Thyroid gland (tissue), 4 donors: ENCODE measurements at regions of chr6 and their contacts with region 1.

Region 1: GRCh38 chr6:145814501-145815308 is at the start of gene FBXO30:
- DNase-seq: peak; percentile 86 to 88
- H3K4me3 ChIP-seq: peak within 1 kb of the TSS; percentile 35 to 72 (median 56)
- H3K27ac ChIP-seq: peak within 1 kb of the TSS; percentile 85 to 91 (median 90)
- H3K4me1 ChIP-seq: peaks cover 21 to 34% of the 10 kb centered on the region in 2 donors
- H3K27me3 ChIP-seq: no peaks in the 10 kb centered on the region
- CTCF ChIP-seq: peak in 4 of 6 experiments; percentile 3 to 48 (median 28)
- POLR2A ChIP-seq: peak; percentile 81 to 97
- total RNA-seq, gene FBXO30: 18.8 to 33.3 (median 20.8) TPM

Region 2: DNA sequence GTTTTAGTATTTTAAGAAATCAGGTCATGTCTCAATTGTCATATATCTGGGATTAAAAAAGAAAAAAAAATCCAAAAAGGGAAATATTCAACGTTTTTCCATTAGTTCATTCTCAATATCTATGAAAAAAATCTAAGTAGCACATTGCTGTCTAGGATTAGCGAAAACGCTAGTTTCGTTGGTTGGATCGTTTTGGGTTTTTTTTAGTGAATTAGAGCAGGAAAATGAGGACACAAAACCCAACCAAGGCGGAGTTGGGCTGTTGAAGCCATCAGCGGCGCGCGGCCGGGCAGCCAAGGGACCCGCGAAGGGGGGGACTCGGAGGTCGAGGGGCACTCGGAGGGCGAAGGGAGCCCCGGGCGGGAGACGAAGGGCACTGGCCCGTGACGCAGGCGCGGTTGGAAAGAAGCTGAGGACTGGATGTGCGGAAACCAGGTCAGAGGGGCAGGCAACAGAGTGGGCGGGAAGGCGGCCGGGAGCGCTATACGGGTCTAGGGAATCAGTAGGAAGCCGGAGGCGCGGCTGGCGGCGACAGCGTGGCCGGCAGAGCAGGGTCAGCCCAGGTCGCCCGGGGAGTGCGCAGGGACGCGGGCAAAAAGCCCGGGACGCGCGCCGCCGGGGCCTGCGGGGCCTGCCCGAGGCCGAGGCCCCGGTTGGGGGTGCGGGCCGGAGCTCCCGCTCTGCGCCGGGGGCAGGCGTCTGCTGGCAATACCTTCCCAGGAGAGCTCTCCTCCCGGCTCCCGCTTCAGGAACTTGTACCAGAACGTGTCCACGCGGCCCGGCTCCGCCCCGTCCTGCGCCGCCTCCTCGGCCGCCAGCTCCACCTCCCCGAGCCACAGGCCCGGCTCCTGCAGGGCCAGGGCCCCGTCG is 80.0 kb before region 1 on chr6:
- intact Hi-C with region 1: loop called (anchors 5 kb)
- DNase-seq: peak; percentile 92 to 93
- H3K4me3 ChIP-seq: peak overlapping the region; percentile 17 to 75 (median 42)
- H3K27ac ChIP-seq: peak overlapping the region; percentile 96 to 98 (median 98)
- H3K4me1 ChIP-seq: no peaks in the 10 kb centered on the region
- H3K27me3 ChIP-seq: no peaks in the 10 kb centered on the region
- CTCF ChIP-seq: no peak
- POLR2A ChIP-seq: peak in 1 of 2 donors; percentile 84

Region 3: GRCh38 chr6:145924600-145924999 is 109.9 kb after region 1 on chr6:
- intact Hi-C with region 1: no loop called
- DNase-seq: no peak
- H3K4me3 ChIP-seq: no peak overlapping the region
- H3K27ac ChIP-seq: no peak overlapping the region
- H3K4me1 ChIP-seq: no peaks in the 10 kb centered on the region
- H3K27me3 ChIP-seq: no peaks in the 10 kb centered on the region
- CTCF ChIP-seq: no peak
- POLR2A ChIP-seq: no peak